ENCODE measurements at regions of chr9 and their contacts with region 1.

Region 1: GRCh38 chr9:19456996-19457692 is 48.3 kb downstream of the ACER2 start:
- DNase-seq: peak; percentile 67
- ATAC-seq: peak; percentile 94
- H3K4me3 Mint-ChIP-seq: peak overlapping the region; percentile 47
- H3K27ac Mint-ChIP-seq: no peak overlapping the region
- H3K4me1 Mint-ChIP-seq: peaks cover 8% of the 10 kb centered on the region
- H3K27me3 Mint-ChIP-seq: no peaks in the 10 kb centered on the region
- CTCF ChIP-seq: peak; percentile 97

Region 2: DNA sequence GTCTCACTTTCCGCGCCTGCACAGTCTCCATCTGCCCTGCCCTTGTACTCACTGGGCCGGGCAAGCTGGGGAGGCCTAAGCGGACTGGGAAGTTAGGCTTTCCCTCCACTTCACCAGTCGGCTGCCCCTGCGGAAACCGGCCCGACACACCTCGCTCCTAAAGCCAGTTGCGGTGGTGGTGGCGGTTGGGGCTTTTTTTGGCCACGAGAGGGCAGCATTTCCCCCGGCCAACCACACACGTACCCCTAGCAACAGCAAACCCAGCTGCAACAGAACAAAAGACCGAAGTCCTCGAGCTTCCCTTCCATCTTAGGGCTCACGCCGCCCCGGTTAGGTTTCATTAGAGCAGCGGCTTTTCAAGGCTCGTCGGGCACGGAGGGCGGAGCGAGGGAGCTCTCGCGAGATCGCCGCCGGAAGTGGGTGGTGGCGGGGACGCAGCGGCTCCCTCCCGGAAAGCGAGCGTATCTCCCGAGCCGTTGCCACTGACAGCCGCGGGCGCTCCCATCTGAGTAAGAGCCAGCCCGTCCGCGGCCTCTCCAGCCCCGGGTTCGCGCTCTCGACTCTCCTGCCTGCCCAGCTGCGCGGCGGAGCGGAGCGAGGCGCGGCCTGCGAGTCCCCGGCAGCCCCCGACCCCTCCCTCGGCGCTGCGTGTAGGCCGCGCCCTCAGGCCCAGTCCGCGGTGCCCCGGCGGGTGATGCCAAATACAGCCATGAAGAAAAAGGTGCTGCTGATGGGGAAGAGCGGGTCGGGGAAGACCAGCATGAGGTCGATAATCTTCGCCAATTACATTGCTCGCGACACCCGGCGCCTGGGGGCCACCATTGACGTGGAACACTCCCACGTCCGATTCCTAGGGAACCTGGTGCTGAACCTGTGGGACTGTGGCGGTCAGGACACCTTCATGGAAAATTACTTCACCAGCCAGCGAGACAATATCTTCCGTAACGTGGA is 407.9 kb before region 1 on chr9 and contains the start of gene RRAGA:
- CTCF ChIA-PET with region 1: interaction called, 11 read pairs
- POLR2A ChIA-PET with region 1: no interaction called
- intact Hi-C with region 1: loop called (anchors 5 kb)
- DNase-seq: peak; percentile 96
- ATAC-seq: peak; percentile 93
- H3K4me3 Mint-ChIP-seq: peak within 1 kb of the TSS; percentile 98
- H3K27ac Mint-ChIP-seq: peak within 1 kb of the TSS; percentile 97
- H3K4me1 Mint-ChIP-seq: peaks cover 26% of the 10 kb centered on the region
- H3K27me3 Mint-ChIP-seq: no peaks in the 10 kb centered on the region
- CTCF ChIP-seq: peak; percentile 71
- total RNA-seq, gene RRAGA: 53.6 to 56.3 TPM

Region 3: GRCh38 chr9:19085295-19085694 is 371.8 kb before region 1 on chr9:
- CTCF ChIA-PET with region 1: interaction called, 10 read pairs
- POLR2A ChIA-PET with region 1: no interaction called
- intact Hi-C with region 1: no loop called
- DNase-seq: no peak
- ATAC-seq: peak; percentile 67
- H3K4me3 Mint-ChIP-seq: no peak overlapping the region
- H3K27ac Mint-ChIP-seq: peak overlapping the region; percentile 8
- H3K4me1 Mint-ChIP-seq: peaks cover 2% of the 10 kb centered on the region
- H3K27me3 Mint-ChIP-seq: no peaks in the 10 kb centered on the region
- CTCF ChIP-seq: peak; percentile 43

Region 4: GRCh38 chr9:19441730-19442129 is 15.4 kb before region 1 on chr9:
- CTCF ChIA-PET with region 1: interaction called, 16 read pairs
- POLR2A ChIA-PET with region 1: interaction called, 5 read pairs
- intact Hi-C with region 1: no loop called
- DNase-seq: no peak
- ATAC-seq: peak; percentile 74
- H3K4me3 Mint-ChIP-seq: peak overlapping the region; percentile 57
- H3K27ac Mint-ChIP-seq: peak overlapping the region; percentile 64
- H3K4me1 Mint-ChIP-seq: peaks cover 10% of the 10 kb centered on the region
- H3K27me3 Mint-ChIP-seq: no peaks in the 10 kb centered on the region
- CTCF ChIP-seq: no peak

Region 5: DNA sequence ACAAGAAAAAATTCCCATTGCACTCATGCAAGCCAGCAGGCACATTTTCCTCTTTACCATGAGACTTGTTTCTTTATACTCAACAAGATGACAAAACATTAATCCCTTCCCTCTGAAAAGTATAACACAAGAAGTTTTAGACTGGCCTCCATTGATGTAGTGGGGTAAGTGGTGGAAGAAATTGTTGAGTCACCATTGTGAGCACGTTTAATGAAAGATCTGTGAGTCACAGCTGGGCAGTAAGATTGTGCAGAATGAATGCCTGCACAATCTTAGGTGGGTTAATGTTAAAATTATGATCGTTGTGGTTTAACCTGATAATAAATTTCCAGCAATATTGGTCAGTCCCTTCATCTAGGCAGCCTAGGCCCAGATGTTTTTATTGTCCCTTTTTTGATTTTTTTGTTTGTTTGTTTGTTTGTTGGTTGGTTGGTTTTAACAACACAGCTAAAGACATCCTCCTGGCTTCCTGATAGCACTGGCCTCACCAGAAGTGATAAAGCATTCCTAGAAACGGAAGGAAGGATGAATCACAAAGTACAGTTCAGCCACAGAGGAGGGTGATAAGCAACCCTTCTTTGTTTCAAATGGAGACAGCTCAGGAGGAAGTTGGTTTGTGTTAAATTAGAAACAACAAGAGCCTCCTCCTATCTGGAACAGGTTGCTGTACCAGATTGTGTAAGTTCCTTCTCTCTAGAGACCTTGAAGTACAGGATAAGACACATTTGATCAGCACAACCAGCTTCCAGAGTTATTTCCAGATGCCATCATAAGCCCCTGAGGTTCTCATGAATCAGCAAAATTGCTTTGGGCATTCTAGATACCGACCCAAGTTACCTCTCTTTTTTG is 291.4 kb after region 1 on chr9:
- CTCF ChIA-PET with region 1: no interaction called
- POLR2A ChIA-PET with region 1: no interaction called
- intact Hi-C with region 1: no loop called
- DNase-seq: no peak
- ATAC-seq: peak; percentile 66
- H3K4me3 Mint-ChIP-seq: no peak overlapping the region
- H3K27ac Mint-ChIP-seq: no peak overlapping the region
- H3K4me1 Mint-ChIP-seq: peaks cover 4% of the 10 kb centered on the region
- H3K27me3 Mint-ChIP-seq: peaks cover 2% of the 10 kb centered on the region
- CTCF ChIP-seq: no peak

Measured in activated CD8-positive, alpha-beta T cell treated with anti-CD3 and anti-CD28 coated beads for 36 hours (primary cell).